ENCODE measurements at regions of chr2 and their contacts with region 1.

Region 1: GRCh38 chr2:209208211-209208610 is 215.6 kb upstream of the MAP2 start:
- DNase-seq: no peak
- ATAC-seq: no peak
- H3K4me3 ChIP-seq: no peak overlapping the region
- H3K4me3 Mint-ChIP-seq: peak overlapping the region in 4 of 10 donors; percentile 44 to 79 (median 52)
- H3K27ac ChIP-seq: no peak overlapping the region
- H3K27ac Mint-ChIP-seq: no peak overlapping the region
- H3K4me1 ChIP-seq: no peaks in the 10 kb centered on the region
- H3K4me1 Mint-ChIP-seq: no peaks in the 10 kb centered on the region
- H3K27me3 ChIP-seq: no peaks in the 10 kb centered on the region
- H3K27me3 Mint-ChIP-seq: peaks cover 0 to 3% (median 0%) of the 10 kb centered on the region in 5 donors

Region 2: DNA sequence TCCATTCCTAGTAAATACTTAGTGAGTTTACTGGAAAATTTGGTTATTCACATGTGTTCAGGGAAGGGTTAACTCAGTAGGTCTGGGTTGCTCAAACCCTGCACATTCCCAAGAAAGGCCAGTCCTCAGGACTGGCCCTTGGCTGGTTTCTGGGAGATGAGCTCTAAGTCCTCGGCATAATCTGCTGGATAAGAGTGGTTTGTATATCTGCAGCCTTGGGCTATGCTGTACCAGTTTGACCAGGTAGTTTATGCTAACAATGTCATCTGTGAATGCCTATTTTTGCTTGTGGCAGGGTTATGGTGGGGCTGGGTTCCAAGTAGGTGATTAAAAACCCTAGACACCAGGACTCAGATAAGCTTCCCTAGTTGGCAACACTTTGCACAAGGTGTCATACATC is 809.0 kb before region 1 on chr2:
- CTCF ChIA-PET with region 1: no interaction called
- POLR2A ChIA-PET with region 1: no interaction called
- intact Hi-C with region 1: loop called in 1 of 2 experiments (anchors 5 kb)
- DNase-seq: no peak
- ATAC-seq: no peak
- H3K4me3 ChIP-seq: no peak overlapping the region
- H3K4me3 Mint-ChIP-seq: no peak overlapping the region
- H3K27ac ChIP-seq: no peak overlapping the region
- H3K27ac Mint-ChIP-seq: no peak overlapping the region
- H3K4me1 ChIP-seq: no peaks in the 10 kb centered on the region
- H3K4me1 Mint-ChIP-seq: no peaks in the 10 kb centered on the region
- H3K27me3 ChIP-seq: no peaks in the 10 kb centered on the region
- H3K27me3 Mint-ChIP-seq: peaks cover 35 to 47% (median 40%) of the 10 kb centered on the region in 5 donors

Region 3: GRCh38 chr2:208466151-208466919 is 741.9 kb before region 1 on chr2:
- CTCF ChIA-PET with region 1: no interaction called
- POLR2A ChIA-PET with region 1: no interaction called
- intact Hi-C with region 1: loop called in 1 of 2 experiments (anchors 5 kb)
- DNase-seq: no peak
- ATAC-seq: no peak
- H3K4me3 ChIP-seq: no peak overlapping the region
- H3K4me3 Mint-ChIP-seq: no peak overlapping the region
- H3K27ac ChIP-seq: no peak overlapping the region
- H3K27ac Mint-ChIP-seq: no peak overlapping the region
- H3K4me1 ChIP-seq: no peaks in the 10 kb centered on the region
- H3K4me1 Mint-ChIP-seq: no peaks in the 10 kb centered on the region
- H3K27me3 ChIP-seq: no peaks in the 10 kb centered on the region
- H3K27me3 Mint-ChIP-seq: peaks cover 2 to 17% (median 7%) of the 10 kb centered on the region in 5 donors

Region 4: DNA sequence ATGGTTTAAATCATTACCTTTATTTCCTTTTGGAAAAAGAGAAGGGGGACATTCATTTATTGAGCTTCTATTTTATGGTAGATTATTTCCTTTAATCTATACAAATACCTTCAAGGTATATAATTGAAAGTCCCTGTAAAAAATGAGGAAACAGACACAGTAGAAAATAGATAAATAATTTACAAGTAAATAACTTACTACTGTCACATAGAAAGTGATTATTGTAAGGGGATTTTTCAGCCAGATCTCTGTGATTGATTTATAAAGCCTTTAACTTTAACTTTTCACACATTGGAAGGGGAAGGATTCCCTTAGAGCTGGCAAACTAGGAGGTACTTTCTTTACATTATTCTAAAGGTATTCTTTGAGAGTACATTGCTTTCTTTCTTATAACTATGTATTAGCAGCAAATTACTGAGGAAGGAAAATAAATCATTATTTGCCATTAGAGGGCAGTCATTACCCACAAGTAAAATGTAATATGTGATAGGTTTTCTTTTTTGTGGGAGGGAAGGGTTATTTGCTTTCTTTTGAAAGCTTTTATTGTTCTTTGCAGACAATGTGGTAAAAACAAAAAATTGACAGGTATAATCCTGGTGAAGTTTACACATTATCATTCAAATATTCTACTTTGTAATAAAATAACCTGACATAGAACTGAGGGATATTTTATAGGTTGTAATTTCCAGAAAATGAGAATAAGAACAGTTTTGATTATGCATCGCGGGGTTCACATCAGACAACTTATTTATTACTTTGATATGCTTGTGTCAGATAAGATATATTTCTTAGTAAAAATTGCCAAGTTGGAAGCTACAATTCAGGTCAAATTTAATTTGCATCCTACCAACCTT is 769.4 kb after region 1 on chr2:
- CTCF ChIA-PET with region 1: no interaction called
- POLR2A ChIA-PET with region 1: no interaction called
- intact Hi-C with region 1: no loop called
- DNase-seq: peak in 6 of 9 donors; percentile 27 to 61 (median 48)
- ATAC-seq: no peak
- H3K4me3 ChIP-seq: no peak overlapping the region
- H3K4me3 Mint-ChIP-seq: no peak overlapping the region
- H3K27ac ChIP-seq: no peak overlapping the region
- H3K27ac Mint-ChIP-seq: no peak overlapping the region
- H3K4me1 ChIP-seq: no peaks in the 10 kb centered on the region
- H3K4me1 Mint-ChIP-seq: no peaks in the 10 kb centered on the region
- H3K27me3 ChIP-seq: no peaks in the 10 kb centered on the region
- H3K27me3 Mint-ChIP-seq: peaks cover 4 to 18% (median 11%) of the 10 kb centered on the region in 5 donors

Measured in naive thymus-derived CD4-positive, alpha-beta T cell (primary cell).